ENCODE measurements at regions of chr13 and their contacts with region 1.

Region 1: DNA sequence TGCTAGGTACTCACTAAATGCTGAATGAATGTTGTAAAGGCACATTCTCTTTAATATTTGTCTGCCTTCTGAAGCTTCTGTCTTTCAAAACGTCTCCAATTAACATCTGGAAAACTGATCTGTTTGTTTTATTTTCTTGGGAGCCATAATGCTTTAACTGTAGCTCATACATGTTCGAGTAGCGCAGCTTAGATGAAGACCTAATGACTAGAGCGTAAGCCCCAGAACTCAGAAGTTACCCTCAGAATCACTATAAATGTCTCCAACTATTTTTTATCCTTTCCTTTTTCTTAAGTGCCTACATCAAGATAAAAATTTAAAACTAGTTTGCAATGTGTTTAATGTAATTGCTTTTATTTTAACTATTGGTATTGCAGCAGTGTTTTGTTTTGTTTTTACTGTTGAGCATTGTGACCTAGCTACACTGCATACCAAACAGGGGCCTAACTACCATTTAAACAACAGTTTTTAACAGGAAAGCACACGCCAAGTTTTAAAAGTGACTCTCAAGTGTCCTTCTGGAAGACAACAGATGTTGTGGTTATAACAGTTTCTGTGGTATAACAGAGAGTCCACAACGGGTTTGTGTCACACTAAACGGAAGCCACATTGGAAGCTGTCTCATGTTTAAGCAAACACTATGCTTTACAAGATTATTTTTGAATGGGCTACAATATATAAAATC is 42.0 kb downstream of the MRPL57 start:
- DNase-seq: peak in 1 of 9 donors; percentile 8
- ATAC-seq: peak; percentile 58
- H3K4me3 ChIP-seq: no peak overlapping the region
- H3K4me3 Mint-ChIP-seq: peak overlapping the region in 2 of 10 donors; percentile 30 to 57
- H3K27ac ChIP-seq: no peak overlapping the region
- H3K27ac Mint-ChIP-seq: peak overlapping the region in 1 of 9 donors; percentile 79
- H3K4me1 ChIP-seq: peaks cover 7 to 14% of the 10 kb centered on the region in 2 donors
- H3K4me1 Mint-ChIP-seq: peaks cover 6 to 19% (median 18%) of the 10 kb centered on the region in 7 donors
- H3K27me3 ChIP-seq: no peaks in the 10 kb centered on the region
- H3K27me3 Mint-ChIP-seq: peaks cover 4 to 40% (median 17%) of the 10 kb centered on the region in 5 donors

Region 2: DNA sequence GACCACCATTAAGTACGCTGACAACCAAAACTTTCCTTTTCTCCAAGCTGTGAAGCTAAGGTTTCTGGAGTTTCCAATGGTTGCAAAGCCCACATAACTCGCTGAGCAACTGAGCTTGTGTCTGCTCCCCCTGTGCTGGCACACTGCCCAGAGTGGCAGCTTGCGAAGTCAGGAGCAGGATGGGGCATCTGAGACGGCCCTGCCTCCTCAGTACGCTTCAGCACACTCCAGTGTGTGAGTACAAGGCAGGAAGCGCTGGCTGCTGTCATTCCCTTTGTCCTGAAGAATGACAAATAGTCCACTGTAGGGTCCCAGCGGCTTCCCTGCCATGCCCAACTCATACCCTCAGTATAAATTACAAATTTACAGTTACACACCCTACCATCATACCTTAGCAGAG is 93.6 kb before region 1 on chr13:
- CTCF ChIA-PET with region 1: no interaction called
- POLR2A ChIA-PET with region 1: no interaction called
- intact Hi-C with region 1: no loop called
- DNase-seq: no peak
- ATAC-seq: no peak
- H3K4me3 ChIP-seq: no peak overlapping the region
- H3K4me3 Mint-ChIP-seq: peak overlapping the region in 1 of 10 donors; percentile 30
- H3K27ac ChIP-seq: no peak overlapping the region
- H3K27ac Mint-ChIP-seq: peak overlapping the region in 1 of 9 donors; percentile 4
- H3K4me1 ChIP-seq: no peaks in the 10 kb centered on the region
- H3K4me1 Mint-ChIP-seq: no peaks in the 10 kb centered on the region
- H3K27me3 ChIP-seq: no peaks in the 10 kb centered on the region
- H3K27me3 Mint-ChIP-seq: peaks cover 0 to 13% (median 0%) of the 10 kb centered on the region in 5 donors

Region 3: GRCh38 chr13:21232196-21232595 is 13.7 kb after region 1 on chr13:
- CTCF ChIA-PET with region 1: no interaction called
- POLR2A ChIA-PET with region 1: no interaction called
- intact Hi-C with region 1: loop called in 1 of 2 experiments (anchors 2 kb)
- DNase-seq: no peak
- ATAC-seq: no peak
- H3K4me3 ChIP-seq: no peak overlapping the region
- H3K4me3 Mint-ChIP-seq: peak overlapping the region in 5 of 10 donors; percentile 7 to 62 (median 16)
- H3K27ac ChIP-seq: no peak overlapping the region
- H3K27ac Mint-ChIP-seq: peak overlapping the region in 1 of 9 donors; percentile 60
- H3K4me1 ChIP-seq: no peaks in the 10 kb centered on the region
- H3K4me1 Mint-ChIP-seq: peaks cover 0 to 16% (median 11%) of the 10 kb centered on the region in 7 donors
- H3K27me3 ChIP-seq: no peaks in the 10 kb centered on the region
- H3K27me3 Mint-ChIP-seq: peaks cover 0 to 11% (median 4%) of the 10 kb centered on the region in 5 donors

Region 4: GRCh38 chr13:21383090-21383489 is 164.6 kb after region 1 on chr13:
- CTCF ChIA-PET with region 1: no interaction called
- POLR2A ChIA-PET with region 1: no interaction called
- intact Hi-C with region 1: no loop called
- DNase-seq: no peak
- ATAC-seq: no peak
- H3K4me3 ChIP-seq: no peak overlapping the region
- H3K4me3 Mint-ChIP-seq: no peak overlapping the region
- H3K27ac ChIP-seq: no peak overlapping the region
- H3K27ac Mint-ChIP-seq: peak overlapping the region in 1 of 9 donors; percentile 21
- H3K4me1 ChIP-seq: no peaks in the 10 kb centered on the region
- H3K4me1 Mint-ChIP-seq: peaks cover 0 to 4% (median 0%) of the 10 kb centered on the region in 7 donors
- H3K27me3 ChIP-seq: no peaks in the 10 kb centered on the region
- H3K27me3 Mint-ChIP-seq: no peaks in the 10 kb centered on the region

Measured in naive thymus-derived CD4-positive, alpha-beta T cell (primary cell).